ENCODE measurements at regions of chr9 and their contacts with region 1.

Region 1: GRCh38 chr9:133992780-133993634 is 883 bp upstream of the VAV2 start:
- DNase-seq: peak; percentile 69
- H3K4me3 ChIP-seq: peak overlapping the region; percentile 86
- H3K27ac ChIP-seq: peak overlapping the region; percentile 92
- H3K27me3 ChIP-seq: peaks cover 4% of the 10 kb centered on the region
- CTCF ChIP-seq: peak; percentile 34

Region 2: DNA sequence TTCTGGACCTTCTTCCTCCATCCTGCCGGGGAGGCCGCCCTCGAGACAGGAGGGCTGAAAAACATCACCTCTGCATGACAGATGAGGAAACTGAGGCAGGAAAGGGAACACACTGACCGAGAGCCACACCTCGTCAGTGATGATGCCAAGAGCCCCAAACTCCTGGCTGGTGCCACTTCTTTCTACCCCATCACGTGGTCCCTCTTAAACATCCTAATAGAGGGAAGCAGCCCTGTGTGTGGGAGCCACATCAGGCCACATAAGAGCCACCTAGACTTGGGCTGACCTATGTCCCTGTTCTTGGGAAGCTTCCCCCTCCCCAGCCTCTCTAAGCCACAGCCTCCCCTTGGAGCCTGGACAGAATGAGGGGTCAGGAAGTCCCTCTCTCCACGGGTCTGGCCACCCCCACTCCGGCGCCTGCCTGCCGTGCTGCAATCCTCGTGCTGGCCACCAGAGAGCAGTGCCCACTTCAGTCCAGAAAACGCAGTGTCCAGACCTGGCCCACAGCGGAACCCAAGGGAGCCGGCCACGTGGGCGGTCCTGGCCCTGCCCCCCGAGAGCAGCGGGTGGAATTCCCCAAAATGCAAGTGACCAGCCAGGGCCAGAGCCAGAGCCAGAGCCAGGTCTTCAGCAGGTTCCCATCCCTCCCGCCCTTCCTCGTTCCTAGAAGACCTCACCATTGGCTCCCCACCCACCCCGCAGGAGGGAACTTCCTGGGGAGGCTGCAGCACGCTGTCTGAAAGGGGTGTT is 200.1 kb before region 1 on chr9:
- CTCF ChIA-PET with region 1: interaction called, 105 read pairs
- POLR2A ChIA-PET with region 1: interaction called, 3 read pairs
- DNase-seq: peak; percentile 48
- H3K4me3 ChIP-seq: no peak overlapping the region
- H3K27ac ChIP-seq: no peak overlapping the region
- H3K27me3 ChIP-seq: no peaks in the 10 kb centered on the region
- CTCF ChIP-seq: peak; percentile 95

Region 3: DNA sequence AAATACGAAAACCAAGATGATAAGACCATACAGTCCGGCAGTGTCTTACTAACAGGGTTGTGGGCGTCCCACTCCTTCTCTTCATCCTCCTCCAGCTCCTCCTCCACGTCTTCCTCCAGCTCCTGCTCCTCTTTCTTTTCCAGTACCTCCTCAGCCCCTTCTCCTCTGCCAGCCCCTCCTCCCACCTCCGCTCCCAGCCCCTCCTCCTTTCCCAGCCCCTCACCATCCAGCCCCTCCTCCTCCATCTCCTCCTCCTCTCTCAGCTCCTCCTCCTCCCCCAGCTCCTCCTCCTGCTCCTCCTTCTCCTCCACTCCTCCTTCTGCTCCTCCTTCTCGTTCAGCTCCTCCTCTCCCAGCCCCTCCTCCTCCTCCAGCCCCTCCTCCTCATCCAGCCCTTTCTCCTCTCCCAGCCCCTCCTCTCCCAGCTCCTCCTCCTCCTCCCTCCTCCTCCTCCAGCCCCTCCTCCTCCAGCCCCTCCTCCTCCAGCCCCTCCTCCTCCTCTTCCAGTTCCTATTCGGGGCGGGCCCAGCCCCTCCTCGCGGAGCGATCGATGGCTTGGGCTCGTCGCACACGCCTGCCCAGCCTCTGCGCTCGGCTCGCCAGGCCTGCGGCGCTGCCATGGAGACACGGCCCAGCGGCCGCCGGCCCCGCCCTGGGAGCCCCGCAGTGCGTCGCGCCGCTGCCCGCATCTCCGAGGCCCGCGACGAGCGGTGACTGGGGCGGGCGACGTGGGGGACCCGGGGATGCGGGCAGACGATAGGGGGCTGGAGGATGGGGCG is 32.0 kb after region 1 on chr9 and contains the start of gene BRD3OS:
- CTCF ChIA-PET with region 1: interaction called, 20 read pairs
- POLR2A ChIA-PET with region 1: interaction called, 7 read pairs
- DNase-seq: peak; percentile 100
- H3K4me3 ChIP-seq: peak within 1 kb of the TSS; percentile 90
- H3K27ac ChIP-seq: peak within 1 kb of the TSS; percentile 31
- H3K27me3 ChIP-seq: no peaks in the 10 kb centered on the region
- CTCF ChIP-seq: no peak
- polyA plus RNA-seq, gene BRD3OS: 20.2 and 20.3 TPM in 2 replicates

Region 4: DNA sequence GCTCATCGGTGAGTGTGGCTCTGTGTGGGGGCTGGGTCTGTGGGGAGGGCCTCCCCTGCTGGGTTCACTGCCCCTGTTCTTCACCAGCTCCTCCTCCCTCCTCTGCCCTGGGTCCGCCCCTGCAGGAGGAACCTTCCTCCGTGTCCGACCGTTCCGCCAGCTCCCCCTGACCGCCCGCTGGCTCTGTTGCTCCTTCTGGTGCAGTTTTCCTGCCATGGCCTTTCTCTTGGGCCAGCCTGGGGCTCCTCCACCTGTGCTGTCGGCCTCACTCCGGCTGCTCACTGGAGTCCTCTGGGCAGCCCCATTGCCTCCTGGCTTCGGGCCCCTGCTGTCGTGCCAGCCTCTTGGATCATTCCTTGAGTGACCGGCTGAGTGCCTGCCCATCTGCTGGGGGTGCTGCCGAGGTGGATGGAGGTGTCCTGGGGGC is 159.0 kb after region 1 on chr9:
- CTCF ChIA-PET with region 1: no interaction called
- POLR2A ChIA-PET with region 1: no interaction called
- DNase-seq: no peak
- H3K4me3 ChIP-seq: no peak overlapping the region
- H3K27ac ChIP-seq: no peak overlapping the region
- H3K27me3 ChIP-seq: no peaks in the 10 kb centered on the region
- CTCF ChIP-seq: no peak

Region 5: DNA sequence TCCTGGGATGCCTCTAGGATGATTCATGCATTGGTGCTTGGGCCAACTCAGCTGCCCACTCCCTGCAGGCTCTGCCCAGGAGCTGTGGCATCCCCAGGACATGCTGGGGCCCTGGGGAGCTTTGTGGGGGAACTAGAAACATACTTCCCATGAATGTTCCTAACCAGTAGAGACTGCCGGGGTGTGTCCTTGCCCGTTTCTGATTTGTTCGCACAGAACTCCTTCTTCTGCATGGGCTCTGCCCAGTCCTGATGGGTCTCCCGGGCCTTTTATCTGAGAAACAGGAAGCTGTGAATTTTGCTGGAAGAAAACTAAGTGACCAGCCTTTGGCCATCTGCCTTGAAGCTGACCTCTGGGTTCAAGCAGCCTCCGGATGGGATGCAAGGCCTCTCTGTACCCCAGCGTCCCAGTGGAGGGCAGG is 243.0 kb after region 1 on chr9:
- CTCF ChIA-PET with region 1: no interaction called
- POLR2A ChIA-PET with region 1: no interaction called
- DNase-seq: no peak
- H3K4me3 ChIP-seq: no peak overlapping the region
- H3K27ac ChIP-seq: no peak overlapping the region
- H3K27me3 ChIP-seq: peaks cover 24% of the 10 kb centered on the region
- CTCF ChIP-seq: no peak

Measured in AG04450 (cell line).